Colonic mucosa (tissue), 4 donors: ENCODE measurements at regions of chr1 and their contacts with region 1.

Region 1: DNA sequence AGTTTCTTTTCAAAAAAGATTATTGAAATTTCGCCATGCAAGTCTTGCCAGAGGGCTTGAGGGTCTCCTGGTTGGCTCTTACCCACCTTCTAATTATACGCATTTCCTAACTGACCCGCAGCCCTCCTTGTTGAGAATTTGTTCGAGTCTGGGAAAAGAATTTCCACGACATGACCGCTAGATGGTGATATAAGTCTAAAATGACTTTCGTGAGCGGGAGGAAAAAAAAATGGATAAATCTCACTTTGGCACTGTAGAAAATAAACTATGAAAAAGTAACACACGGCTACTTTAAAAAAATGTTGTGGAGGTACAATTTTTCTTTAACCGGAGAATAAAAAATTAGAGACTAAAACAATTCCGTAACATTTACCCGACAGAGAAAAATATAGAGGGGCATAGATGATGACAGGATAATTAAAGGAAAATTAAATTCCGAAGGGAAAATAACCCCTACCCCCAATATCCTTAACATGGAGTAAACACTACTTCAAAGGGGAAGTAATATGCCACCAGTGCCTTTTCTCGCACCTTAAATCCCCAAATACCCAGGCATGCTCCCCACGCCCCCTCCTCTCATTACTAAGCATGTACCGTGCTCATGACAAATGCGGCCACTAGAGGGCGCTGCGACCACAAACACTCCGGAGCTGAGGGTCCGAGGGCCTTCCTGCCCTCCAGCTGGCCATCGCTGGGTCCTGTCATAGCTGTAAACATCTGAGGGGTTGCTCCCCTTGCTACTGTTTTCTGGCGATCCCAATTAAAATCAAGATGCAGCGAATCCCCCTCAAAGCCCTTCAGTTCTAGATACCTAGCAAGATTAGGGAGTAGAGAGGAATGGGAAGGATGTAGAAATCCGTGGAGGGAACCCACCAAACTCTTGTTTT is 266.9 kb downstream of the ASTN1 start:
- DNase-seq: peak; percentile 41
- H3K4me3 ChIP-seq: no peak overlapping the region
- H3K27ac ChIP-seq: no peak overlapping the region
- H3K4me1 ChIP-seq: peaks cover 3% of the 10 kb centered on the region
- H3K27me3 ChIP-seq: no peaks in the 10 kb centered on the region
- CTCF ChIP-seq: peak; percentile 56

Region 2: DNA sequence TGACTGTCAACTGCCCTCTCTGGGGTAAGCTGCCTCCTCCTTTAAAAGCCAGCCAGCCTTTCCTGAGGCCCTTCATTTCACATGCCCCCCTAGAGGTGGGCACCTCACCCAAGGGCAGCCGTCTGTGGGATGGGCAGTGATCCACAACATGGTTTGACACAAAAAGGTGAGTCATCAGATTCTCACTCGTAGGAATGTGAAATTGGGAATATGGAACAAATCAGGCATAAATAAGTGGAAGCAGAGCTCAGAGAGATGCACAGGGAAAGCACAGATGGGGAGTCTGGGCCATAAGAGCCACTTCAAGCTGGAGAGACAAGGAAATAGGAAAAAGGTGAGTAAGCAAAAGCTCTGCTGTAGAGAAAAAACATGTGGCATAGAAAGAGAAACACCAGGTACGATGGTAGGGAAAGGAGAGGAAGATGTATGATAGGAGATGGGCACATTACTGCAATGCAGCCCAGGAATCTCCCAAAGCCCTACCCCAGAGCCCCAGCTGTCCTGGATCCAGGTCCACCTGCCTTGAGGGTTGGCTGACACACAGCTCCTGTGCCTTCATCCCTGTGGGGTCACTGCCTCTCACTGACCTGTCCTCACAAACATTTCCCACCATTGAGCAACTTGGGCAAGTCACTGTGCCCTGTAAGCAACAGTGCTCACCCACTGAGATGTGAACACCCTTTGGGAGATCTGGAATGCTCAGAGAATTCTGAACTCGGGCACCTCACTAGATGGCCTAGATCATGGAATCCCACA is 180.3 kb after region 1 on chr1:
- intact Hi-C with region 1: no loop called
- DNase-seq: no peak
- H3K4me3 ChIP-seq: no peak overlapping the region
- H3K27ac ChIP-seq: no peak overlapping the region
- H3K4me1 ChIP-seq: no peaks in the 10 kb centered on the region
- H3K27me3 ChIP-seq: no peaks in the 10 kb centered on the region
- CTCF ChIP-seq: no peak

Region 3: GRCh38 chr1:177181631-177182291 is 284.2 kb after region 1 on chr1:
- intact Hi-C with region 1: loop called (anchors 5 kb)
- DNase-seq: peak; percentile 45
- H3K4me3 ChIP-seq: no peak overlapping the region
- H3K27ac ChIP-seq: no peak overlapping the region
- H3K4me1 ChIP-seq: no peaks in the 10 kb centered on the region
- H3K27me3 ChIP-seq: peaks cover 6% of the 10 kb centered on the region
- CTCF ChIP-seq: peak; percentile 68

Region 4: GRCh38 chr1:177780096-177780700 is 882.6 kb after region 1 on chr1:
- intact Hi-C with region 1: loop called (anchors 5 kb)
- DNase-seq: no peak
- H3K4me3 ChIP-seq: no peak overlapping the region
- H3K27ac ChIP-seq: no peak overlapping the region
- H3K4me1 ChIP-seq: no peaks in the 10 kb centered on the region
- H3K27me3 ChIP-seq: no peaks in the 10 kb centered on the region
- CTCF ChIP-seq: peak; percentile 35

Region 5: DNA sequence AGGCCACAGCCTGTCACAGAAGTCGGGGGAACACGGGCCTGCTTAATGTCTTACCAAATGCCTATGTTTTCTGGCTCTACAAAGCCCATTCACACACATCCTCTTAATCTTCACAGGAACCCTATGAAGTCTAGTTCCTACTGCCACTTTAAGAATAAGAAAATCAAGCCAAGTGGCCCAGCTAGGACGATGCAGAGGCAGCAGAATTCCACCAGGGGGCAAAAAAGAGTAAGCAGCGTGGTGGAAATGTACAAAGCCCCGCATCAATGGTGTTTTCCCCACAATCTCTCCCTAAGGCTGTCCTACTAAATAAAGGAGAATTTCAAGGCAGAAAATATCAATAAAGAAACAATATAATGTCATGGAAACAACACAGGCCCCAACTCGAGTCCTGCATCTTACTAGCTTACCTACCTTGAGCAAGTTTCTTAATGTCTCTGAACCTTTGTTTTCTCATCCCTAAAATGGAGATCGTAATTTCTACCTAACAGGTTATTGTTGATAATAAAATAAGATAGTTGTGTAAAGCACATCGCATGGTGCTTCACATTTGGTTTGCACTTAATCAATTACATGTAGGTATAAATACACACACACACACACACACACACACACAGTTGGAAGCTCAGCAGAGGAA is 1050.9 kb after region 1 on chr1:
- intact Hi-C with region 1: loop called (anchors 5 kb)
- DNase-seq: peak; percentile 60
- H3K4me3 ChIP-seq: no peak overlapping the region
- H3K27ac ChIP-seq: no peak overlapping the region
- H3K4me1 ChIP-seq: no peaks in the 10 kb centered on the region
- H3K27me3 ChIP-seq: no peaks in the 10 kb centered on the region
- CTCF ChIP-seq: peak; percentile 89